ENCODE measurements at regions of chr3 and their contacts with region 1.

Region 1: GRCh38 chr3:49339945-49340800 is at the start of gene USP4:
- DNase-seq: peak; percentile 82

Region 2: GRCh38 chr3:49181351-49181750 is 158.8 kb before region 1 on chr3:
- CTCF ChIA-PET with region 1: interaction called, 10 read pairs
- POLR2A ChIA-PET with region 1: interaction called, 3 read pairs
- DNase-seq: no peak

Region 3: DNA sequence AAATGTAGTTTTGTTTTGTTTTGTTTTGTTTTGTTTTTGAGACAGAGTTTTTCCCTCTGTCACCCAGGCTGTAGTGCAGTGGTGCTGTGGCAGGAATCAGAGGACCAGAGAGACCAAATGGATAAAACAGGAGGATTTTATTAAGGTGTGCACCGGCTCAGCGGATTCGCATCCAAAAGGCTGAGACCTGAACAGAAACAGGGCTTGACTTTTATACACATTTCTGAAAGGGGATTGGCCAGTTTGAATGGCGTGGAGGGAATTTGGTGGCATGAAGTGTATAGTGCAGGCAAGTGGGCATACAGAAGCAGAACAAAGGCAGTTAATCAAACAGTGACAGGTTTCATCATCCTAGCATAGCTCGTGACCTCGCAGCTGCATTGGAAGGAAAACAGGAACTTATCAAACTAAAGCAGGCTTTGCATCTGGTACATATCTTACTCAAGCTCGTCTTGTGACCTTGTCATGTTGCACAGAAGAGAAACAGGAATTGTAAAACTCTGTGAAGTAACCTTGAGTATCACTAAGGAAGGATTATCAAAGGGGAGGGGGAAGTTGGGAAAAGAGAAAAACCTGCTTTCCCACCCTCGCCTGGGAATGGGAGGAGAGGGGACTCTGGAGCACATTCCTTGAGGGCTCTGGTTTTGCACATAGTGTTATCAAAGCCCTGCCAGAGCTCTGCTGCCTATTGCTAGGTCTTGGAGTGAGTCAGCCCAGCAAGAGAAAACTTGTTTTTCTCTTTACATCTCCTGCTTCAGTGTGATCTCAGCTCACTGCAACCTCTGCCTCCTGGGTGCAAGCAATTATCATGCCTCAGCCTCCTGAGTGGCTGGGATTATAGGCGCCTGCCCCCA is 101.7 kb before region 1 on chr3:
- CTCF ChIA-PET with region 1: no interaction called
- POLR2A ChIA-PET with region 1: no interaction called
- DNase-seq: no peak

Region 4: GRCh38 chr3:49351521-49352011 is 11.4 kb after region 1 on chr3:
- CTCF ChIA-PET with region 1: interaction called, 9 read pairs
- POLR2A ChIA-PET with region 1: interaction called, 26 read pairs
- DNase-seq: no peak

Region 5: GRCh38 chr3:49388289-49388820 is 48.2 kb after region 1 on chr3:
- CTCF ChIA-PET with region 1: no interaction called
- POLR2A ChIA-PET with region 1: interaction called, 10 read pairs
- DNase-seq: no peak

Region 6: GRCh38 chr3:49422379-49423248 is 82.4 kb after region 1 on chr3 and contains the start of gene AMT:
- CTCF ChIA-PET with region 1: no interaction called
- POLR2A ChIA-PET with region 1: interaction called, 12 read pairs
- DNase-seq: no peak

Region 7: DNA sequence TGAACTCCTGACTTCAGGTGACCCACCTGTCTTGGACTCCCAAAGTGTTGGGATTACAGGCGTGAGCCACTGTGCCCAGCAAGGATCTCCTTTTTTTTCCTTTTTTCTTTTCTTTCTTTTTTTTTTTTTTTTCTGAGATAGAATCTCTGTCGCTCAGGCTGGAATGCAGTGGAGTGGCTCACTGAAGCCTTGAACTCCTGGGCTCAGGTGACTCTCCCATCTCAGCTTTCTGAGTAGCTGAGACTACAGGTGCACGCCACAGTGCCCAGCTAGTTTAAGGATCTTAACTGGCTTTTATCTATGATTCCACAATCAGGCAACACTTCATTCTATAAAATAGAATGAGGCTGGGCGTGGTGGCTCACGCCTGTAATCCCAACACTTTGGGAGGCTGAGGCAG is 105.2 kb after region 1 on chr3:
- CTCF ChIA-PET with region 1: interaction called, 18 read pairs
- POLR2A ChIA-PET with region 1: interaction called, 22 read pairs
- DNase-seq: no peak

Measured in HEK293T (cell line).